ENCODE measurements at regions of chr10 and their contacts with region 1.

Region 1: GRCh38 chr10:11830836-11831519 is 7.8 kb downstream of the PROSER2 start:
- DNase-seq: no peak
- H3K4me3 Mint-ChIP-seq: no peak overlapping the region
- H3K27ac Mint-ChIP-seq: no peak overlapping the region
- H3K4me1 Mint-ChIP-seq: no peaks in the 10 kb centered on the region
- H3K27me3 Mint-ChIP-seq: peaks cover 31% of the 10 kb centered on the region

Region 2: DNA sequence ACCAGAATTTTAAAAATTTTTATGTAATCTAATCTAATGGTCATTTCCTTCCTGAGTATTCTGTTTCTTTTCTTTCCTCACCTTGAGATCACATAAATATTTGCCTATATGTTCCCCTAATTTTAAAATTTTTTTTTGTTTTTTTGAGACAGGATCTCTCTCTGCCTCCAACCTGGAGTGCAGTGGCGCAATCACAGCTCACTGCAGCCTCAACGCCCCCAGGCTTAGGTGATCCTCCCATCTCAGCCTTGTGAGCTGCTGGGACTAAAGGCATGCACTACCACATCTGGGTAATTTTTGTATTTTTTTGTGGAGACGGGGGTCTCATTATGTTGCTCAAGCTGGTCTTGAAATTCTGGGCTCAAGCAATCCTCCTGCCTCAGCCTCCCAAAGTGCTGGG is 11.9 kb before region 1 on chr10:
- CTCF ChIA-PET with region 1: interaction called, 16 read pairs
- POLR2A ChIA-PET with region 1: no interaction called
- DNase-seq: no peak
- H3K4me3 Mint-ChIP-seq: no peak overlapping the region
- H3K27ac Mint-ChIP-seq: no peak overlapping the region
- H3K4me1 Mint-ChIP-seq: peaks cover 6% of the 10 kb centered on the region
- H3K27me3 Mint-ChIP-seq: peaks cover 27% of the 10 kb centered on the region

Region 3: GRCh38 chr10:11887411-11888227 is 56.6 kb after region 1 on chr10:
- CTCF ChIA-PET with region 1: no interaction called
- POLR2A ChIA-PET with region 1: no interaction called
- DNase-seq: no peak
- H3K4me3 Mint-ChIP-seq: no peak overlapping the region
- H3K27ac Mint-ChIP-seq: no peak overlapping the region
- H3K4me1 Mint-ChIP-seq: peaks cover 7% of the 10 kb centered on the region
- H3K27me3 Mint-ChIP-seq: no peaks in the 10 kb centered on the region